Astrocyte of the cerebellum (primary cell): ENCODE measurements at regions of chr1 and their contacts with region 1.

Region 1: GRCh38 chr1:165717918-165718515 is 19.7 kb upstream of the ALDH9A1 start:
- DNase-seq: peak; percentile 53
- H3K4me3 ChIP-seq: no peak overlapping the region
- CTCF ChIP-seq: peak; percentile 84

Region 2: GRCh38 chr1:165403835-165404482 is 314.1 kb before region 1 on chr1:
- in situ Hi-C with region 1: no loop called
- DNase-seq: no peak
- H3K4me3 ChIP-seq: no peak overlapping the region
- CTCF ChIP-seq: peak; percentile 54

Region 3: GRCh38 chr1:165928075-165928731 is 210.2 kb after region 1 on chr1:
- in situ Hi-C with region 1: loop called (anchors 10 kb)
- DNase-seq: peak; percentile 6
- H3K4me3 ChIP-seq: no peak overlapping the region
- CTCF ChIP-seq: peak; percentile 70

Region 4: DNA sequence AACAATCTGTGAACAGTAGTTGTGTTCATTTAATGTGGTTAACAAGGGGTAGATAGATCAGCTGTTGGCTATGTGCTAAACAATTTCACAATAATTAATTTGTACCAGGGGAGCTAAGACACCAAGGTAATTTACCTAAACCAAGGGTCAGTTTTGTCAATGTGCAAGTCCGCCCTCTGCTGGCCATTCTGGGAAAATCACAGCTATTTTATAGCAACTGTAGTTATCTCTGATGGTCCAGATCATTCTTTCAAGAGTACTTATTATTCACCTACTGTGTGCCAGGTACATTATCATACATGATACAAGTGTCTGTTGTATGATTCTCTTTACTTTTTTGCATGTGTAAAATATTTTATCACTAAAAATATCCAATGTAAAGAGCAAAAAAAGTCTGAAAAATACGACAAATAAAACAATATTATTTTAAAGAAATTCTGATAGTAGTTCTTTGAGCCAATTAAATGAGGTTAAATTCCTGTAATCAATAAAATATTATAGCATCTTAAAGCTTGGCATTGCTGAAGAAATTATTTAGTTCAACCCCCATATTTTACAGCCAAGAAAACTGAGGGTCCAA is 761.1 kb after region 1 on chr1:
- in situ Hi-C with region 1: loop called (anchors 25 kb)
- DNase-seq: peak; percentile 6
- H3K4me3 ChIP-seq: no peak overlapping the region
- CTCF ChIP-seq: peak; percentile 73